Psoas muscle (tissue), 8 donors: ENCODE measurements at regions of chr9 and their contacts with region 1.

Region 1: DNA sequence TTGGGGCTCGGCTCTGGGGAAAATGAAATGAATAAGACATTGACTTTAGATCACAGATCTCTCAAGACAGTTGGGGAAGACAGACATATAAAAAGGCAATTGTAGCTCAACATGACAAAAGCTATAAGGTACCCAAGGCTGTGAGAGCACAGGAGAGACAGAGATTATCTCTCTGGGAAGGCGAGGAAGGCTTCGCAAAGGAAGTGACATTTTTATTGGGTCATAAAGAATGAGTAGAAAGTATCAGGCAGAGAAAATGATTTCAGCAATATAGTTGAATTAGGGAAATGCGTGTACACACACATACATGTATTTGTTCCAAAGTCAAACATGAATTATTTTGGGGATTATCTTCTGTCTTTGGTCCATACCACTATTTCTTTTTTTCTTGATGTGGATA is 381.8 kb upstream of the ADAMTSL1 start:
- DNase-seq: no peak
- ATAC-seq: no peak
- H3K4me3 ChIP-seq: no peak overlapping the region
- H3K27ac ChIP-seq: no peak overlapping the region
- H3K4me1 ChIP-seq: no peaks in the 10 kb centered on the region
- H3K27me3 ChIP-seq: no peaks in the 10 kb centered on the region
- CTCF ChIP-seq: no peak

Region 2: DNA sequence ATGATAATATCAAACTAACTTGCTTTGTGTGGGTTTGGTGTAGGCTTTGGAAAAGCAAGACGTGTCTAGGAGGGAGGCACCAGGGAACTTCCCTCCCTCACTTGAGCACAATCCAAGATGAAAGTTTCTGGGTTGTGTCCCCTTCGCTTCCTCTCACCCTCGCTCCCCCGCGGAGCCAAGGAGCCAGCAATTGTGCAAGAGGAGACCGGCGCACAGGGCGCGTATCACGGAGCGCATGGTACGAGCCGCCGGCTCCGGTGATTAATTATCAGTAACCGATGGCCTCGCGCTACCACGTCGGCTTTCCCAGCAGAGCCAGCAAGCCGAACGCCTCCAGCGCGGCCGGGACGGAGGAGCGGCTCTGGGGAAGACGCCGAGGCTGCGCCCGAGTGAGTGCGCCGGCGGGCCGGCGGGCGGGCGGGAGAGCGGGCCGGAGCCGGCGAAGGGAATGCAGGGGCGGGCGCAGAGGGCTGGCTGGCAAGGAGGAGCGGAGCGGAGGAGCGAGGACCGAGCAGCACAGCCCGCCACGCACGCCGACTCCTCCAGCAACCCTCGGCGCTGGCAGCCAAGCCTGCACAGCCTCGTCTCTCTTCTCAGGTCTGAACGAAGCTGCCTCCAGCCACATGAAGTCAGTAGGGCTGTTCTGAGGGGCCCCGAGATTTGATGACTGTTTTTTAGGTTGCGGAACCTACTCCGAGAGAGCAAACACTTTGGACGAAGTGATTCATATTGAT is 1365.3 kb before region 1 on chr9:
- intact Hi-C with region 1: no loop called
- DNase-seq: peak; percentile 87 to 93
- ATAC-seq: peak; percentile 82 to 85 (median 84)
- H3K4me3 ChIP-seq: peak overlapping the region; percentile 80
- H3K27ac ChIP-seq: peak overlapping the region; percentile 92
- H3K4me1 ChIP-seq: peaks cover 8% of the 10 kb centered on the region
- H3K27me3 ChIP-seq: no peaks in the 10 kb centered on the region
- CTCF ChIP-seq: no peak

Region 3: GRCh38 chr9:18137815-18138214 is 45.7 kb after region 1 on chr9:
- intact Hi-C with region 1: loop called in 1 of 2 experiments (anchors 5 kb)
- DNase-seq: no peak
- ATAC-seq: no peak
- H3K4me3 ChIP-seq: no peak overlapping the region
- H3K27ac ChIP-seq: no peak overlapping the region
- H3K4me1 ChIP-seq: no peaks in the 10 kb centered on the region
- H3K27me3 ChIP-seq: peaks cover 0 to 3% (median 0%) of the 10 kb centered on the region in 3 donors
- CTCF ChIP-seq: no peak